ENCODE measurements at regions of chr4 and their contacts with region 1.

Region 1: GRCh38 chr4:70734168-70734954 is 12.6 kb downstream of the RUFY3 start:
- DNase-seq: peak; percentile 67
- H3K4me3 Mint-ChIP-seq: peak overlapping the region; percentile 72
- H3K27ac Mint-ChIP-seq: peak overlapping the region; percentile 94
- H3K4me1 Mint-ChIP-seq: peaks cover 55% of the 10 kb centered on the region
- H3K27me3 Mint-ChIP-seq: no peaks in the 10 kb centered on the region

Region 2: GRCh38 chr4:70687821-70688794 is 46.3 kb before region 1 on chr4 and contains the start of gene UTP3:
- CTCF ChIA-PET with region 1: interaction called, 11 read pairs
- DNase-seq: peak; percentile 95
- H3K4me3 Mint-ChIP-seq: peak within 1 kb of the TSS; percentile 92
- H3K27ac Mint-ChIP-seq: peak within 1 kb of the TSS; percentile 96
- H3K4me1 Mint-ChIP-seq: peaks cover 55% of the 10 kb centered on the region
- H3K27me3 Mint-ChIP-seq: no peaks in the 10 kb centered on the region

Region 3: GRCh38 chr4:70704331-70705145 is 29.8 kb before region 1 on chr4:
- CTCF ChIA-PET with region 1: interaction called, 14 read pairs
- DNase-seq: peak; percentile 75
- H3K4me3 Mint-ChIP-seq: peak overlapping the region; percentile 88
- H3K27ac Mint-ChIP-seq: peak overlapping the region; percentile 91
- H3K4me1 Mint-ChIP-seq: peaks cover 40% of the 10 kb centered on the region
- H3K27me3 Mint-ChIP-seq: no peaks in the 10 kb centered on the region

Region 4: DNA sequence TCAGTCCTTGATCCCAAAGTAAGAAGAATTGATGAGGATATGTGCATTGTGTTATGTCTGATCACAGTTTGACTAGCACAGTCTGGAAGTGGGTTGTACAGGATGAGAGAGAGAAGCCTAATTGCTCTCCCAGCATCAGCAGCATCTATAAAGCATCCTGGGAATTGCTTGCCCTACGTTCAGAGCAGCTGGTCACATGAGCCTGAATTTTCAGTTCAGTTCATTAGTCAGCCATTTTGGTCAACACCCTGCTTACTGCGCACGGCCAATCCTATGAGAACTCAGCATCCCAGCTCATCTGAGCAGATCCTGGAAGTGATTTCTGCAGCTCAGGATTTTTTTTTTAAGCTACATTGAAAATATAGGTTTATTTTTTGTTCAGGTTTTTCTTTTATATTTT is 12.6 kb before region 1 on chr4 and contains the start of gene RUFY3:
- CTCF ChIA-PET with region 1: interaction called, 24 read pairs
- DNase-seq: no peak
- H3K4me3 Mint-ChIP-seq: no peak within 1 kb of the TSS
- H3K27ac Mint-ChIP-seq: no peak within 1 kb of the TSS
- H3K4me1 Mint-ChIP-seq: peaks cover 18% of the 10 kb centered on the region
- H3K27me3 Mint-ChIP-seq: no peaks in the 10 kb centered on the region

Region 5: GRCh38 chr4:70801265-70801809 is 67.0 kb after region 1 on chr4:
- CTCF ChIA-PET with region 1: interaction called, 16 read pairs
- DNase-seq: no peak
- H3K4me3 Mint-ChIP-seq: no peak overlapping the region
- H3K27ac Mint-ChIP-seq: peak overlapping the region; percentile 1
- H3K4me1 Mint-ChIP-seq: peaks cover 18% of the 10 kb centered on the region
- H3K27me3 Mint-ChIP-seq: no peaks in the 10 kb centered on the region

Region 6: GRCh38 chr4:70829492-70829891 is 95.1 kb after region 1 on chr4:
- CTCF ChIA-PET with region 1: interaction called, 11 read pairs
- DNase-seq: no peak
- H3K4me3 Mint-ChIP-seq: no peak overlapping the region
- H3K27ac Mint-ChIP-seq: no peak overlapping the region
- H3K4me1 Mint-ChIP-seq: no peaks in the 10 kb centered on the region
- H3K27me3 Mint-ChIP-seq: no peaks in the 10 kb centered on the region

Region 7: DNA sequence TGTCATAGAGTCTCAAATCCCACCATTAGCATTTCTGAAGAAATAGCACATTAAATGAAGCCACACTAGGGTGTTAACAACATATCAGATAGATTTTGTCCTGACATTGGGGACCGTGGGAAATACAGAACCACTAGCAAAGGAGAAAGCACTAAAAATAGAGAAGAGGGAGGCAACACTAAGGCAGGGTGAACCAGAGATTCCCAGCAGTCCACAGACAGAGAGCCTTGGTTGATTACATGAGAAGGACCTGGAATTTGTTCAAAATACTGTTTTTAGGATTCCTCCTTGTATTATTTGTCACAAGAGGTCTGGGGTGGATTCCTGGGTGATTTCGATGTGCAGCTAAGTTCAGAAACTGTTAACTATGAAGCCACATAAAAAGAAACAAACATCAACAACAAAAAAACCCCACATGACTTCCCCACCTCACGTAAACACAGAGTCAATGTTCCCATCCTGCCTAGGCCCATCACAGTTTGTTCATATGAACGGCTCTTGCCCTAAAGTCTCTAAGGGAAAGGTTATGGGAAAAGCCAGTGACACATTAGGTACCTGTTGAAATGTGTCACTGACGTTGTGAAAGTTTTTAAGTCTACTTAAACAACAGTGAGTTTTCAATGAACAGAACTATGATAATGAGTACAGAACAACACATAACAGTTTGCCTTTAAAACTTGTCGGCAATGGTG is 128.9 kb after region 1 on chr4:
- CTCF ChIA-PET with region 1: no interaction called
- DNase-seq: no peak
- H3K4me3 Mint-ChIP-seq: no peak overlapping the region
- H3K27ac Mint-ChIP-seq: no peak overlapping the region
- H3K4me1 Mint-ChIP-seq: peaks cover 11% of the 10 kb centered on the region
- H3K27me3 Mint-ChIP-seq: no peaks in the 10 kb centered on the region

Region 8: DNA sequence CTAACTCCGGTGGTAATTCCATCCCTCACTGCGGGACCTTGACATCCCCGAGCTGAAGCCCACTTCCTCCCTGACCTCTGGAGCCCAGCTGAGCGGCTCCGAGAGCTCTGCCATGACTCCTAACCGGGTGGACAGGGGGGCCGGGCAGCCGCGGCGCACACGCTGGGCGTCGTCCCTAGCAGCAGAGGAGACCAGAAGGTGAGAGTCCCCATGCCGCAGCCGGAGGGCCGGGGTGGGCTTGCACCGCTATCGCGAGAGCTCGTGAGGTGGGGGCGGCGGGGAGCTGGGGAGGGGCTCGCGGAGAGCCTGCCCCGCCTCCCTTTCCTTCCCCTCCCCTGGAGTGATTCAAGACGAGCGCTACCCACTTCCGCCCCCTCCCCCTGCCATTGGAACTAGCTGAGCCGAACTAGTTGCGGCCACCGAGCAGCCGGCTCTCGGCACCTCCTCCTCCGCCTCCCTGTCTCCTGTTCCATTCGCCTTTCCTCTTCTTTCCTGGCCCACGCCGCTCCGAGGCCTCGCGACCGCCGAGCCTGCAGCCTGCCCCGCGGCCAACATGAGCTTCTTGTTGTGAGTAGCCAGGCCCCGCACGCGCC is 167.7 kb after region 1 on chr4 and contains the start of gene MOB1B:
- CTCF ChIA-PET with region 1: interaction called, 12 read pairs
- DNase-seq: peak; percentile 93
- H3K4me3 Mint-ChIP-seq: peak within 1 kb of the TSS; percentile 98
- H3K27ac Mint-ChIP-seq: peak within 1 kb of the TSS; percentile 90
- H3K4me1 Mint-ChIP-seq: peaks cover 29% of the 10 kb centered on the region
- H3K27me3 Mint-ChIP-seq: no peaks in the 10 kb centered on the region